Right cardiac atrium (tissue), 5 donors: ENCODE measurements at regions of chrX and their contacts with region 1.

Region 1: GRCh38 chrX:46554942-46555341 is 9.7 kb upstream of the ZNF674 start:
- DNase-seq: no peak
- ATAC-seq: no peak
- H3K4me3 ChIP-seq: no peak overlapping the region
- H3K27ac ChIP-seq: no peak overlapping the region
- H3K4me1 ChIP-seq: peaks cover 2% of the 10 kb centered on the region
- H3K27me3 ChIP-seq: no peaks in the 10 kb centered on the region

Region 2: DNA sequence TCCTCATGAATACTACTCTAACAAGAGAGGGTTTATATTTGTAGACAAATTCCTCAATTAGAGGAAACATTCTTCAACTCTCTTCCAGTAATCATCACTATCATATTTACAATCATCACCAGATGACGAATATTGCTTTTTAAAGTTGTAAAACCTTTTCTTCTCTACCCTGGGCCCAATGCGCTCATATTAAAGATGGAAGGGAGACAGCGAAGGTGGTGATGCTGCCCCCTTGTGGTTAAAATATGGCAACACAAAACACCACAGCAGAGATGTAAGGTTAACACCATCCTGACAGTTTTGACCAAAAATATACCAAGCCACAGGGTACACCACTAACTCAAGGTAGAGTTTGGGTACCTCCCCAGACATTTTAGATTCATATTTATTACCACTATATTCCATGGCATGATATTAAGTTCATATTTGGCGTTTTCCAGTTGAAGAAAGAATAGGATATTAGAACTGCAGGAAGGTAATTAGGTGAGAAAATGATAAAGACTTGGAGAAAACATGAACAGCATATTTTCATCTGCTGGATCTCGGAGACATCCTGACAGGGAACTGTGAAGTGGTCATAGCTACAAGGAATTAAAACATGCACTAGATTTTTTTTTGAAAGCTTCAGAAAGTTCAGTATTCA is 131.2 kb after region 1 on chrX:
- intact Hi-C with region 1: loop called in 2 of 4 experiments (anchors 5 to 10 kb)
- DNase-seq: no peak
- ATAC-seq: peak; percentile 41 to 62
- H3K4me3 ChIP-seq: no peak overlapping the region
- H3K27ac ChIP-seq: no peak overlapping the region
- H3K4me1 ChIP-seq: no peaks in the 10 kb centered on the region
- H3K27me3 ChIP-seq: no peaks in the 10 kb centered on the region

Region 3: GRCh38 chrX:46737473-46737872 is 182.5 kb after region 1 on chrX:
- intact Hi-C with region 1: no loop called
- DNase-seq: no peak
- ATAC-seq: no peak
- H3K4me3 ChIP-seq: no peak overlapping the region
- H3K27ac ChIP-seq: no peak overlapping the region
- H3K4me1 ChIP-seq: no peaks in the 10 kb centered on the region
- H3K27me3 ChIP-seq: no peaks in the 10 kb centered on the region